ENCODE measurements at regions of chr9 and their contacts with region 1.

Region 1: GRCh38 chr9:133417541-133418461 is at the start of gene REXO4:
- DNase-seq: peak; percentile 76 to 87
- H3K4me3 ChIP-seq: peak within 1 kb of the TSS; percentile 75 to 92
- H3K27ac ChIP-seq: peak within 1 kb of the TSS; percentile 85 to 86
- H3K4me1 ChIP-seq: peaks cover 0 to 26% (median 22%) of the 10 kb centered on the region in 4 donors
- H3K27me3 ChIP-seq: no peaks in the 10 kb centered on the region
- CTCF ChIP-seq: no peak

Region 2: DNA sequence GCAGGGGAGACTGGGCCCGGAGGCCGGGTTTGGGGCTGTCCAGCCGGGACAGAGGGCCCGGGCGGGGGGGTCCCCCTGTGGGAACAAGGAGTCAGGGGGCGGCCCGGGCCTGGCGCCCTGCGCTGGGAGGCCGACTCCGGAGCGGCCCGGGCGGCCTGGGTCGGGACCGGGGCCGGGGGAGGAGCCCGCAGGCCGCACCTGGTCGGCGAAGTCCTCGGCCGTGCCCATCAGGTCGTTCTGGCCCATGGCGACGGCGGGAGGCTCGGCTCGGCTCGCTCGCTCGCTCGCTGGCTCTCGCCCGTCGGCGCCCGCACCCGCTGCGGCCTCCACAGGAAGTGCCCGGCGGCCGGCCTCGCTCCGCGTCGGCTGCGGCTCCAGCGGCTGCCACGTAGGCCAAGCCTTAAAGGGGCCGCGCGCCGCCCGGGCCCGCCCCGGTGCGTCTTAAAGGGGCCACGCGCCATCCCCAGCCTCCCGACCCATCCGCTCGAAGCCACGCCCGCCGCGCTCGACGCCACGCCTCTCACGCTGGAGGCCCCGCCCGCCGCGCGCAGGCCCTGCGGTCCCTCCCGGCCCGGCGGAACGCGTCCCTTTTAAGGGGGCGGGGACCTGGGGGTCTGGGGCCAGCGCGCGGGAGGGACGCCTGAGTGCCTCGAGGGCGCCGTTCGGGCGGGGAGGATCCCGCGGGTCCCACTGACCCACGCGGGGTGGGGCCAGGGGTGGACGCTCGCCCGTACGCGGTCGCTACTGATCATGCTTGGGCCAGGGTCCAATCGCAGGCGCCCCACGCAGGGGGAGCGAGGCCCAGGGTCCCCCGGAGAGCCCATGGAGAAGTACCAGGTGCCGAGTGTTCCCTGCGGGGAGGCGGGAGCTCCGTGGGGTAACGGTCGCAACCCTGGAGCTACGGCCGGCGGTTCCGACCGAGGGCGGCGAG is 41.8 kb before region 1 on chr9 and contains the starts of genes STKLD1 and SURF4:
- intact Hi-C with region 1: loop called (anchors 5 kb)
- DNase-seq: peak; percentile 94 to 97
- H3K4me3 ChIP-seq: peak within 1 kb of the TSS; percentile 94
- H3K27ac ChIP-seq: peak within 1 kb of the TSS; percentile 93
- H3K4me1 ChIP-seq: peaks cover 0 to 48% (median 36%) of the 10 kb centered on the region in 4 donors
- H3K27me3 ChIP-seq: no peaks in the 10 kb centered on the region
- CTCF ChIP-seq: peak in 1 of 2 experiments; percentile 44

Region 3: DNA sequence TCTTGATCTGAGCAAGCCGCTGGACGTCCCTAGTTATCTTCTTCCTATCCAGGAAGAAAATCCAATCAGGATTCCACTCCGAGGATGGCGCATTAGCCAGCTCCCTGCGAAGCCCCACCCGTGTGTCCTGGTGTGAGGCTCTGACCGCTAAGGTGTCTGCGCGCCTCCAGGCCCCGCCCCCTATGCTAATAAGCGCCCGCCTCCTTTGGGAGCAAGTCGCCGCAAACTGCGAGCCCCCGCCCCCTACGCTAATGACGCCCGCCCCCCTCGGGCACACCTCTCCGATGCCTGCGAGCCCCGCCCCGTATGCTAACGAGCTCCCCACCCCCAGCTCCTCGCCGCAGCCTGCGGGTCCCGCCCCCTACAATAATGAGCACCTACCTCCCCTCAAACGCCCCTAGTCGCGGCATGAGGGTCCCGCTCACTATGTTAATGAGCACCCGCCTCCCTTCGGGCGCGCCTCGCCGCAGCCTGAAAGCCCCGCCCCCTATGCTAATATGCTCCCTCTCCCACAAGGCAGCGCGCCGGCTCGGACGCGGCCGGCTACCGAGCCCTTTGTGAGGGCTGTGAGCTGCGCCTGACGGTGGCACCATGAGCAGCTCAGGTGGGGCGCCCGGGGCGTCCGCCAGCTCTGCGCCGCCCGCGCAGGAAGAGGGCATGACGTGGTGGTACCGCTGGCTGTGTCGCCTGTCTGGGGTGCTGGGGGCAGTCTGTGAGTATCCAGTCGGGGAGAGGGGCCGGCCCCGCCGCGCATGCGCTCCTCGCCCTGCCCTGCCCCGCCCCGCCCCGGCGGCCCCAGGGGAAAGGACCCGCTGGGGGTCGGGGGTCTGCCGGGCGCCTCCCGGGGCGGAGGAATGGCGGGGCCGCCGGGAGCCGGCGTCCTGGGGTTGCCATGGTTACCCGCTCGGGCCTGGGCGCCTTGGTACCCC is 41.9 kb after region 1 on chr9 and contains the start of gene CACFD1:
- intact Hi-C with region 1: loop called (anchors 2 kb)
- DNase-seq: peak; percentile 96 to 98
- H3K4me3 ChIP-seq: peak within 1 kb of the TSS; percentile 63 to 73
- H3K27ac ChIP-seq: peak within 1 kb of the TSS; percentile 86 to 96
- H3K4me1 ChIP-seq: peaks cover 0 to 24% (median 12%) of the 10 kb centered on the region in 4 donors
- H3K27me3 ChIP-seq: no peaks in the 10 kb centered on the region
- CTCF ChIP-seq: no peak

Measured in tibial artery (tissue), 4 donors.